Activated T-helper 1 cell treated with anti-CD3 and anti-CD28 coated beads, Interleukin-12 subunit alpha, Interleukin-12 subunit beta, Interleukin-2, Interleukin-4 antibody, amounts not matched to agents 30 ng/mL and 10 ng/mL and 1 ng/mL, durations not matched to agents 14 hours and 24 hours and 36 hours (primary cell): ENCODE measurements at regions of chr16 and their contacts with region 1.

Region 1: GRCh38 chr16:9090960-9091866 is at the start of gene HAPSTR1:
- DNase-seq: peak; percentile 98
- H3K4me3 Mint-ChIP-seq: peak within 1 kb of the TSS; percentile 97
- H3K27ac Mint-ChIP-seq: peak within 1 kb of the TSS; percentile 96
- H3K4me1 Mint-ChIP-seq: peaks cover 38% of the 10 kb centered on the region
- H3K27me3 Mint-ChIP-seq: peaks cover 1% of the 10 kb centered on the region
- total RNA-seq, gene HAPSTR1: 55.2 and 59.1 TPM in 2 replicates

Region 2: GRCh38 chr16:8674413-8675022 is 416.7 kb before region 1 on chr16 and contains the start of gene ABAT:
- intact Hi-C with region 1: loop called (anchors 2 kb)
- DNase-seq: peak; percentile 91
- H3K4me3 Mint-ChIP-seq: peak within 1 kb of the TSS; percentile 87
- H3K27ac Mint-ChIP-seq: peak within 1 kb of the TSS; percentile 81
- H3K4me1 Mint-ChIP-seq: peaks cover 20% of the 10 kb centered on the region
- H3K27me3 Mint-ChIP-seq: peaks cover 6% of the 10 kb centered on the region
- total RNA-seq, gene ABAT: 7.3 and 7.7 TPM in 2 replicates

Region 3: GRCh38 chr16:8963825-8964441 is 127.3 kb before region 1 on chr16 and contains the start of gene USP7:
- intact Hi-C with region 1: loop called (anchors 1 kb)
- DNase-seq: peak; percentile 92
- H3K4me3 Mint-ChIP-seq: peak within 1 kb of the TSS; percentile 97
- H3K27ac Mint-ChIP-seq: peak within 1 kb of the TSS; percentile 93
- H3K4me1 Mint-ChIP-seq: peaks cover 41% of the 10 kb centered on the region
- H3K27me3 Mint-ChIP-seq: peaks cover 20% of the 10 kb centered on the region
- total RNA-seq, gene USP7: 184 and 188 TPM in 2 replicates

Region 4: DNA sequence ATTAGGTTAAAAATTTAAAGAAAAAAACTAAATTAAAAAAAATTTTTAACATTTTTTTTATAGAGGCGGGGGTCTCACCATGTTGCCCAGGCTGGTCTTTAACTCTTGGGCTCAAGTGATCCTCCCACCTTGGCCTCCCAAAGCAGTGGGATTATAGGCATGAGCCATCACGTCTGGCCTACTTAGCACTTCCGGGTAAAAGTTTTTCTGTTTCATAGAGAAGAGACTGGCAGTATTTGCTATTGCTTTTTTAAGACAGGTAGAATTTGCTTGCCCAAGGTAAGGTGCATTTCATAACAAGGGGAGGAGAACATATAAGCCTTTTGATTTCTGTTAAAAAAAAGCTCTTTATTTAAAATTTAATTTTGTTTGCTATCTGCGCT is 11.8 kb before region 1 on chr16:
- intact Hi-C with region 1: loop called (anchors 1 kb)
- DNase-seq: no peak
- H3K4me3 Mint-ChIP-seq: no peak overlapping the region
- H3K27ac Mint-ChIP-seq: no peak overlapping the region
- H3K4me1 Mint-ChIP-seq: peaks cover 28% of the 10 kb centered on the region
- H3K27me3 Mint-ChIP-seq: no peaks in the 10 kb centered on the region

Region 5: GRCh38 chr16:9134739-9135138 is 43.5 kb after region 1 on chr16:
- intact Hi-C with region 1: loop called (anchors 2 kb)
- DNase-seq: peak; percentile 40
- H3K4me3 Mint-ChIP-seq: no peak overlapping the region
- H3K27ac Mint-ChIP-seq: peak overlapping the region; percentile 69
- H3K4me1 Mint-ChIP-seq: peaks cover 22% of the 10 kb centered on the region
- H3K27me3 Mint-ChIP-seq: peaks cover 6% of the 10 kb centered on the region